Activated B cell treated with CpG ODN at 0.5 μM for 24 hours (primary cell): ENCODE measurements at regions of chr7 and their contacts with region 1.

Region 1: DNA sequence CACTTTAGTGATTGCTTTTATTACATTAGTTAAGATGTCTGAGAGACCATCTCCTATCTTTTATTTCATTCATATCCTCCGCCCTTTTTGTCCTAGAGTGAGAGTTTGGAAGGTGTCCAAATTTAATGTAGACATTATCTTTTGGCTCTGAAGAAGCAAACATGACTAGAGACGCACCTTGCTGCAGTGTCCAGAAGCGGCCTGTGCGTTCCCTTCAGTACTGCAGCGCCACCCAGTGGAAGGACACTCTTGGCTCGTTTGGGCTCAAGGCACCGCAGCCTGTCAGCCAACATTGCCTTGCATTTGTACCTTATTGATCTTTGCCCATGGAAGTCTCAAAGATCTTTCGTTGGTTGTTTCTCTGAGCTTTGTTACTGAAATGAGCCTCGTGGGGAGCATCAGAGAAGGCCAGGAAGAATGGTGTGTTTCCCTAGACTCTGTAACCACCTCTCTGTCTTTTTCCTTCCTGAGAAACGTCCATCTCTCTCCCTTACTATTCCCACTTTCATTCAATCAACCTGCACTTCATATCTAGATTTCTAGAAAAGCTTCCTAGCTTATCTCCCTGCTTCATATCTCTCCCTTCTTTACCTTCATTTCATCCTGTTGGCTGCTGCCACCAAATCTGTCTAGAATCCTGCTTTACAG is 10.4 kb upstream of the CLCN1 start:
- DNase-seq: peak; percentile 24
- ATAC-seq: peak; percentile 65
- H3K4me3 Mint-ChIP-seq: no peak overlapping the region
- H3K27ac Mint-ChIP-seq: no peak overlapping the region
- H3K4me1 Mint-ChIP-seq: peaks cover 17% of the 10 kb centered on the region
- H3K27me3 Mint-ChIP-seq: no peaks in the 10 kb centered on the region
- CTCF ChIP-seq: no peak

Region 2: DNA sequence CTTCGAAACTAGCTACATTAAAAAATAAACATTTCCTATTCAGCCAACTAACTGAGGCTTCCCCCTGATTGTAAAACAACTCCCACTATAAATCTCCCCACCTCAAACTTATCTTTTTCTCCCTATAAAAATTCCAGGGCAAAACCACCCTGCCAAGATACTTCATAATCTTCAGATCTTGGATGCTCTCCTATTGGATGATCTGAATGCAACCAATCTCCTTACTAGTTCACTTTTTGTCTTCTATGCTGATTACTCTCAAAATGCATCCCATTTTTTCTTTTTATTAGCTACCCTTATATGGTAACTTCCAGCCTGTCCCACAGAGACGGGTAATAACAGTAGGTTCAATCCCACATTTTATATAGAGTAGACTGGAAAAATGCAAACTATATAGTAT is 1032.7 kb before region 1 on chr7:
- CTCF ChIA-PET with region 1: no interaction called
- POLR2A ChIA-PET with region 1: no interaction called
- intact Hi-C with region 1: no loop called
- DNase-seq: no peak
- ATAC-seq: no peak
- H3K4me3 Mint-ChIP-seq: no peak overlapping the region
- H3K27ac Mint-ChIP-seq: no peak overlapping the region
- H3K4me1 Mint-ChIP-seq: no peaks in the 10 kb centered on the region
- H3K27me3 Mint-ChIP-seq: peaks cover 6% of the 10 kb centered on the region
- CTCF ChIP-seq: no peak

Region 3: GRCh38 chr7:143003393-143004051 is 302.0 kb before region 1 on chr7:
- CTCF ChIA-PET with region 1: no interaction called
- POLR2A ChIA-PET with region 1: no interaction called
- intact Hi-C with region 1: no loop called
- DNase-seq: no peak
- ATAC-seq: peak; percentile 60
- H3K4me3 Mint-ChIP-seq: peak overlapping the region; percentile 81
- H3K27ac Mint-ChIP-seq: no peak overlapping the region
- H3K4me1 Mint-ChIP-seq: peaks cover 16% of the 10 kb centered on the region
- H3K27me3 Mint-ChIP-seq: peaks cover 1% of the 10 kb centered on the region
- CTCF ChIP-seq: no peak

Region 4: DNA sequence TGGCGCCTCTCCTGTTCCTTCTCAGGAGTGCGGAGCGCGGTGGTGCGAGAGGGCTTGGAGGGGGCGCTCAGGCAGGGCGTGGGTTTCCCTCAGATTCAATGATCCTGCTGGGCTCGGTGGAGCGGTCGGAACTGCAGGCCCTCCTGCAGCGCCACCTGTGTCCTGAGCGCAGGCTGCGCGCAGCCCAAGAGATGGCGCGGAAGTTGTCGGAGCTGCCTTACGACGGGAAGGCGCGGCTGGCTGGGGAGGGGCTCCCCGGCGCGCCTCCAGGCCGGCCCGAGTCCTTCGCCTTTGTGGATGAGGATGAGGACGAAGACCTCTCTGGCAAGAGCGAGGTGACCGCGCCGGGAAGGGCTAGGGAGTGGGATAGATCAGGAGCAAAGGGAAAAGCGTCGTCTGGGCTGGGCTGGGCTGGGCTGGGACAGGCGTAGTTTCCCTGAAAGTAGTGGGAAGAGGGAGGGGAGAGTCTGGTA is 39.9 kb after region 1 on chr7:
- CTCF ChIA-PET with region 1: no interaction called
- POLR2A ChIA-PET with region 1: no interaction called
- intact Hi-C with region 1: loop called (anchors 5 kb)
- DNase-seq: no peak
- ATAC-seq: peak; percentile 91
- H3K4me3 Mint-ChIP-seq: peak overlapping the region; percentile 64
- H3K27ac Mint-ChIP-seq: no peak overlapping the region
- H3K4me1 Mint-ChIP-seq: peaks cover 6% of the 10 kb centered on the region
- H3K27me3 Mint-ChIP-seq: peaks cover 27% of the 10 kb centered on the region
- CTCF ChIP-seq: no peak

Region 5: GRCh38 chr7:143416565-143417149 is 111.1 kb after region 1 on chr7:
- CTCF ChIA-PET with region 1: interaction called, 6 read pairs
- POLR2A ChIA-PET with region 1: no interaction called
- intact Hi-C with region 1: loop called (anchors 5 kb)
- DNase-seq: no peak
- ATAC-seq: no peak
- H3K4me3 Mint-ChIP-seq: no peak overlapping the region
- H3K27ac Mint-ChIP-seq: no peak overlapping the region
- H3K4me1 Mint-ChIP-seq: no peaks in the 10 kb centered on the region
- H3K27me3 Mint-ChIP-seq: peaks cover 37% of the 10 kb centered on the region
- CTCF ChIP-seq: peak; percentile 58